Caco-2 (cell line): ENCODE measurements at regions of chr2 and their contacts with region 1.

Region 1: GRCh38 chr2:85504778-85505323 is 34.1 kb upstream of the MAT2A start:
- DNase-seq: no peak
- H3K4me3 ChIP-seq: no peak overlapping the region
- H3K4me3 Mint-ChIP-seq: no peak overlapping the region
- H3K27ac Mint-ChIP-seq: no peak overlapping the region
- H3K4me1 ChIP-seq: peaks cover 12% of the 10 kb centered on the region; the same call in 1 of the 2 replicates
- H3K4me1 Mint-ChIP-seq: no peaks in the 10 kb centered on the region
- H3K27me3 ChIP-seq: no peaks in the 10 kb centered on the region
- H3K27me3 Mint-ChIP-seq: no peaks in the 10 kb centered on the region
- CTCF ChIP-seq: no peak

Region 2: DNA sequence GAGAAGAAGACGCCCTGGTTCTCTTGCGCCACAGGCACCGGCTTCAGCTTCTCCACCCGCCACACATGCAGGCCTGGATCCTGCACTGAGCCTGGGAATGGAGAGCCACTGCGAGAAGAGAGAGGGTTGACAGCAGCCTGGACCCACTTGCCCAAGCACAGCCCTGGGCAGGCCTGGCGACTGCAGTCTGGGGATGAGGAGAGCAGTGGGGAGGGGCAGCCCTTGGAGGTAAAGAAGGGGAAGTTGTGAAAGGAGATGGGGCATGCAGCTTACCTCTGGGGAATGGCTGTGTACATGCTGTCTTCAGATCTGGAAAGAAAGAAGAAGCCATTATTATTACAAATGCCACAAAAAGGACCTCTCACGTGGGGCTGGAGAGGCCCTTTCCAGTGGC is 103.0 kb before region 1 on chr2:
- CTCF ChIA-PET with region 1: no interaction called
- POLR2A ChIA-PET with region 1: no interaction called
- intact Hi-C with region 1: no loop called
- DNase-seq: no peak
- H3K4me3 ChIP-seq: no peak overlapping the region
- H3K4me3 Mint-ChIP-seq: no peak overlapping the region
- H3K27ac Mint-ChIP-seq: no peak overlapping the region
- H3K4me1 ChIP-seq: peaks cover 4% of the 10 kb centered on the region; the same call in 1 of the 2 replicates
- H3K4me1 Mint-ChIP-seq: peaks cover under 1% of the 10 kb centered on the region
- H3K27me3 ChIP-seq: no peaks in the 10 kb centered on the region
- H3K27me3 Mint-ChIP-seq: no peaks in the 10 kb centered on the region
- CTCF ChIP-seq: no peak

Region 3: DNA sequence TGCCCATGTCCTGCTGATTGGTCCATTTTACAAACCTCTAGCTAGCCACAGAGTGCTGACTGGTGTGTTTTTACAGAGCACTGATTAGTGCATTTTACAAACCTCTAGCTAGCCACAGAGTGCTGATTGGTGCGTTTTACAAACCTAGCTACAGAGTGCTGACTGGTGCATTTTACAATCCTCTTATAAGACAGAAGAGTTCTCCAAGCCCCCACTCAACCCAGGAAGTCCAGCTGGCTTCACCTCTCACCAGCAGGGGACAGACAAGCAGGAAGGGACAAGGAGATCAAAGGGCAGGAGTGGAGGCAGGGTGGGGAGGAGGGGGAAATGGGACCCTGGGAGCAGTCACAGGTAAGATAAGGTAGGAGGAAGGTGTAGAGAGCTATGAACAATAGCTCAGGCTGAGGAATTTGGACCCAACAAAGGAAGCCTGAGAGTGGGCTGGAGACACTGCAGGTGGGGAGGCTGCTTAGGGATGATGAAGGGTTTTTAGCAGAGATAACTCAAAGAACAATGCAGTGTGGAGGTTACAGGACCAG is 49.2 kb before region 1 on chr2:
- CTCF ChIA-PET with region 1: interaction called, 5 read pairs
- POLR2A ChIA-PET with region 1: interaction called, 16 read pairs
- intact Hi-C with region 1: no loop called
- DNase-seq: peak; percentile 49 to 78
- H3K4me3 ChIP-seq: no peak overlapping the region
- H3K4me3 Mint-ChIP-seq: no peak overlapping the region
- H3K27ac Mint-ChIP-seq: peak overlapping the region; percentile 83
- H3K4me1 ChIP-seq: peaks cover 10% of the 10 kb centered on the region
- H3K4me1 Mint-ChIP-seq: peaks cover 15% of the 10 kb centered on the region
- H3K27me3 ChIP-seq: no peaks in the 10 kb centered on the region
- H3K27me3 Mint-ChIP-seq: no peaks in the 10 kb centered on the region
- CTCF ChIP-seq: peak in 1 of 2 experiments; percentile 43